ENCODE measurements at regions of chr17 and their contacts with region 1.

Region 1: GRCh38 chr17:38982858-38983746 is 15.9 kb upstream of the FBXO47 start:
- DNase-seq: peak; percentile 68
- ATAC-seq: peak; percentile 78
- H3K4me3 Mint-ChIP-seq: no peak overlapping the region
- H3K27ac Mint-ChIP-seq: no peak overlapping the region
- H3K4me1 Mint-ChIP-seq: no peaks in the 10 kb centered on the region
- H3K27me3 Mint-ChIP-seq: no peaks in the 10 kb centered on the region
- CTCF ChIP-seq: peak; percentile 91

Region 2: GRCh38 chr17:38879878-38880682 is 103.0 kb before region 1 on chr17:
- CTCF ChIA-PET with region 1: interaction called, 12 read pairs
- POLR2A ChIA-PET with region 1: no interaction called
- intact Hi-C with region 1: no loop called
- DNase-seq: peak; percentile 46
- ATAC-seq: no peak
- H3K4me3 Mint-ChIP-seq: peak overlapping the region; percentile 44
- H3K27ac Mint-ChIP-seq: peak overlapping the region; percentile 85
- H3K4me1 Mint-ChIP-seq: peaks cover 86% of the 10 kb centered on the region
- H3K27me3 Mint-ChIP-seq: no peaks in the 10 kb centered on the region
- CTCF ChIP-seq: no peak

Region 3: DNA sequence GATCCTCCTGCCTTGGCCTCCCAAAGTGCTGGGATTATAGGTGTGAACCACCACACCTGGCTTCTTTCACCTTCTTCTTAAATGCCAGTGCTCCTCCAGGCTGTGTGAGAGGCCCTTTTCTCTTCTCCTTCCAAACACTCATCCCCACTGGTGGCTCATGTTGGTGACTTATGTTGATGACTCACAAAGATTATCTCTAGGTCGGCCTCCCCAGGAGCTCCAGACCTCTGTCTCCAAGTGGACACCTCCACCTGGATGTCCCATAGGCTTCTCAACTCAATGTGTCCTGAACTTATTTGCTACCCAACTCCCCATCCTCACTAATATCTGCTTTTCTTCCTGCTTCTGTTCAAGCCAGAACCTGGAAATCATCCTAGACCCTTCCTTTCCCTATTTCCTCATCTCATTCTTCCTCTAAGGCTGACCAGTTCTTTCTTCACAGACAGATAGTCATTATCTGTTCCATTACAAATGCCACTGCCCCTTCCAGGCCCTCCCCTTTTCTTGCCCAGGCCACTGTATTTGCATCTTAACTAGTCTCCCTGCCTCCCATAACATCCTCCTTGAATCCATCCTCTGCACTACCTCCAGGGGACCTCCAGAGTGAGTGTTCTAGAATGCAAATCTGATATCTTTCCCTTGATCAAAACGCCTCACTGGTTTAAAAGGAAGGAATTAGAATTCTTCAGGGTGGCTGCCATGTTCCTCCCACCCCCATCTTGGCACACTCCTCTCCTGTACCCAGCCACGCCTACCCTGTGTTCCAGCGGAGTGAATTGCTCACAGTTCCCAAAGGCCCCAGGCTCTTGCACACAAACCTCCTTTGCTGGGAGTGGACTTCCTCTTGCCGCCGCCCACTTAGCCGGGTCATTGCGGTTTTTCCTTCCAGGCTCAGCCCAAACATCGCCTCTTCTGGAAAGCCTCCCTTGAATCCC is 18.9 kb after region 1 on chr17:
- CTCF ChIA-PET with region 1: interaction called, 15 read pairs
- POLR2A ChIA-PET with region 1: no interaction called
- intact Hi-C with region 1: no loop called
- DNase-seq: no peak
- ATAC-seq: no peak
- H3K4me3 Mint-ChIP-seq: no peak overlapping the region
- H3K27ac Mint-ChIP-seq: no peak overlapping the region
- H3K4me1 Mint-ChIP-seq: peaks cover 26% of the 10 kb centered on the region
- H3K27me3 Mint-ChIP-seq: no peaks in the 10 kb centered on the region
- CTCF ChIP-seq: no peak

Region 4: GRCh38 chr17:39057701-39058206 is 74.7 kb after region 1 on chr17:
- CTCF ChIA-PET with region 1: interaction called, 15 read pairs
- POLR2A ChIA-PET with region 1: no interaction called
- intact Hi-C with region 1: no loop called
- DNase-seq: no peak
- ATAC-seq: no peak
- H3K4me3 Mint-ChIP-seq: peak overlapping the region; percentile 75
- H3K27ac Mint-ChIP-seq: no peak overlapping the region
- H3K4me1 Mint-ChIP-seq: peaks cover 10% of the 10 kb centered on the region
- H3K27me3 Mint-ChIP-seq: no peaks in the 10 kb centered on the region
- CTCF ChIP-seq: no peak

Region 5: GRCh38 chr17:39115135-39115534 is 132.0 kb after region 1 on chr17:
- CTCF ChIA-PET with region 1: no interaction called
- POLR2A ChIA-PET with region 1: no interaction called
- intact Hi-C with region 1: no loop called
- DNase-seq: no peak
- ATAC-seq: no peak
- H3K4me3 Mint-ChIP-seq: no peak overlapping the region
- H3K27ac Mint-ChIP-seq: no peak overlapping the region
- H3K4me1 Mint-ChIP-seq: no peaks in the 10 kb centered on the region
- H3K27me3 Mint-ChIP-seq: no peaks in the 10 kb centered on the region
- CTCF ChIP-seq: no peak

Region 6: DNA sequence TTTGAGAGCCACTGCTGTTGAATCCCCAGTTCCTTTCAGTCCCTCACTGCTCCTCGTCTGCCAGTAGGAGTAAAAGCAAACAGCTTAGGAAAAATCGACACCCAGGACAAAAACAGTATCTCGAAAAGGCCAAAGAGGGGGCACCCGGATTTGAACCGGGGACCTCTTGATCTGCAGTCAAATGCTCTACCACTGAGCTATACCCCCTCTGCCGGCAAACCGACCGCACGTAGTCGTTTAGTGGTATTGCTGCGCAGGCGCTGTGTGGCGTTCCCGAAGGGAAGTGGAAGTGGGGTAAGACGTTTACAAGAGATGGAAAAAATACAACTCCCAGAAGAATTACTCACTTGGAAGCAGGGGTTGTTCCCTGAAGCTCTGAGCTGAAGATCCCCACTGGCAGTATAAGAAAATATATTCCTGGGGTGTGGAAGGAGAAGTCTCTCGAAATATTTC is 170.5 kb after region 1 on chr17:
- CTCF ChIA-PET with region 1: interaction called, 155 read pairs
- POLR2A ChIA-PET with region 1: interaction called, 3 read pairs
- intact Hi-C with region 1: loop called (anchors 2 kb)
- DNase-seq: peak; percentile 91
- ATAC-seq: peak; percentile 43
- H3K4me3 Mint-ChIP-seq: peak overlapping the region; percentile 86
- H3K27ac Mint-ChIP-seq: peak overlapping the region; percentile 89
- H3K4me1 Mint-ChIP-seq: peaks cover 33% of the 10 kb centered on the region
- H3K27me3 Mint-ChIP-seq: peaks cover 2% of the 10 kb centered on the region
- CTCF ChIP-seq: no peak

Region 7: DNA sequence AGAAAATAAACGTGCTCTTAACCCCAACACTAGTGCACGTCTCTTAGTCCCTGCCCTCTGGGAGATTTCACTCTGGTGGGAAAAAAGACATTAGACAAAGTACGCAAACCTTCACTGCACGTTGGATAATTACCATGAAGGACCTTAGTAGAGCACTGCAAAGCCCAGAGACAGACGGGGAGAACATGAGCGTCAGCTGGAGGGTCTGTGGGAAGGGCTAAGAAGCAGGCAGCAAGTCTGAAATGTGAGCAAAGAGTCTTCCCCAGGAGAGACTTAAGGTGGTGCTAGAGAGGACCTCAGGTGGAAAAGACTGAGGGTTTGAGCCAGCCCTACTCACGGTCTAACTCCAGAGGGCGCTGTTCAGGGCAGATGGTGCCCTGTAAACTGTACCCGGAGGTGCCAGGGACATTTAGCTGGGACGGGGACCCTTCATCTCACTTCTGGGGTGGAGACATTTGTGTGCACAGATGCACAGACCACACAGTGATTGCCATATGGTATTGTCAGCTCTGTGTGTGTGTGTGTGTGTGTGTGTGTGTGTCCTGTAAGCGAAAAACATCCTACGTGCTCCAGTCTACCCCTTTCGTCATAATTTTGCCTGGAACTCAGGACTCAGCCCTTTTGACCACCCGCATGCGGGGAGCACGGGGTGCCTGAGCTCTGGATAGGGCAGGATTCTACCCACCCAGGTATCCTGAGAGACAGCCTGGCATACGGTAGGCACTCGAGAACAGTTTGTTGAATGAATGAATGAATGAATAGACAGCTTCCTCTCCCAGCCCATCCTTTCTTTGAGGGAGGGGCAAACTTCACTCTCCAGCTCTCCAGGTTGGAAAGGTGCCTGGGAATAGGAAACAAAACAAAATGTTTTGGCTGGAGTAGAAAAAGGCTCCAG is 252.7 kb after region 1 on chr17:
- CTCF ChIA-PET with region 1: interaction called, 16 read pairs
- POLR2A ChIA-PET with region 1: no interaction called
- intact Hi-C with region 1: no loop called
- DNase-seq: peak; percentile 80
- ATAC-seq: peak; percentile 77
- H3K4me3 Mint-ChIP-seq: no peak overlapping the region
- H3K27ac Mint-ChIP-seq: no peak overlapping the region
- H3K4me1 Mint-ChIP-seq: peaks cover 35% of the 10 kb centered on the region
- H3K27me3 Mint-ChIP-seq: peaks cover 2% of the 10 kb centered on the region
- CTCF ChIP-seq: peak; percentile 83